Psoas muscle (tissue), 8 donors: ENCODE measurements at regions of chr9 and their contacts with region 1.

Region 1: GRCh38 chr9:133149126-133150107 is 14.3 kb downstream of the GBGT1 start:
- DNase-seq: peak; percentile 93 to 97
- ATAC-seq: peak; percentile 85 to 90 (median 86)
- H3K4me3 ChIP-seq: peak overlapping the region; percentile 84
- H3K27ac ChIP-seq: peak overlapping the region; percentile 77
- H3K4me1 ChIP-seq: peaks cover 26% of the 10 kb centered on the region
- H3K27me3 ChIP-seq: no peaks in the 10 kb centered on the region
- CTCF ChIP-seq: peak; percentile 26

Region 2: DNA sequence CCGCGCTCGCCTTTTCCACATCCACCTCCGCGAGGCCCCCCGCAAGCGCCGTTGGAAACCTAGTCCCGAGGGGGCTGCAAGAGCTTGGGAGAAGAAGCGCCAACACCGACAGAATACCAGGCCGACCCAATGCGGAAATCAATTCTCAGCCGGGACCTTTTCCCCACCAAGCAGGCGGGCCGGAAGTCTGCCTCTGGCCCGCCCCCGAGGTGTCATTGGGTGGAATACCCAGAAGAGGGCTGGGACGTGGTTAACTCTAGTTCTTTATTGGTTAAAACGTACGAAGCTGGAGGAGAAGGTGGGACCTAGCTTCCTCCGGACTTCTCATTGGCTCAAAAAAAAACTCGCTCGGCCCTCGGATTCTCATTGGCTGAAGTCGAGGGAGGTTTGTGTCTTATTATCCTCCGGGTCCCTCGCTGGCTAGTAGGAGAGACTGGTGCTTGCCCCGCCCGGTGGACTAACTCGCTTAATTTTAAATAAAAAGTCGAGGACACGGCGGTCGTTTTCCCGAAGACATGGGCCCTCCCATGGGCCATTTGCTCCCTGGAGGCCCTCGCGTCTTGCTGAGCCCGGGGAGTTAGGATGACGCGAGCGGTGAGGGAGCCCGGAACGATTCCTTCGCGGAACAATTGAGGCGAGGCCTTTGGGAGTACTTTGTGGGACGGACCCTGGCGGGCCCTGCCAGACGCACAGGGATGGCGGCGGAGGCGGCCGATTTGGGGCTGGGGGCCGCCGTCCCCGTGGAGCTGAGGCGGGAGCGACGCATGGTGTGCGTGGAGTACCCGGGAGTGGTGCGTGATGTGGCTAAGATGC is 118.9 kb before region 1 on chr9 and contains the start of gene GTF3C5:
- intact Hi-C with region 1: loop called in 1 of 2 experiments (anchors 2 kb)
- DNase-seq: peak; percentile 92 to 95
- ATAC-seq: peak; percentile 98 to 99 (median 98)
- H3K4me3 ChIP-seq: peak within 1 kb of the TSS; percentile 99
- H3K27ac ChIP-seq: peak within 1 kb of the TSS; percentile 86
- H3K4me1 ChIP-seq: peaks cover 36% of the 10 kb centered on the region
- H3K27me3 ChIP-seq: no peaks in the 10 kb centered on the region
- CTCF ChIP-seq: no peak
- total RNA-seq, gene GTF3C5: 34.6 to 45.8 (median 42.2) TPM

Region 3: DNA sequence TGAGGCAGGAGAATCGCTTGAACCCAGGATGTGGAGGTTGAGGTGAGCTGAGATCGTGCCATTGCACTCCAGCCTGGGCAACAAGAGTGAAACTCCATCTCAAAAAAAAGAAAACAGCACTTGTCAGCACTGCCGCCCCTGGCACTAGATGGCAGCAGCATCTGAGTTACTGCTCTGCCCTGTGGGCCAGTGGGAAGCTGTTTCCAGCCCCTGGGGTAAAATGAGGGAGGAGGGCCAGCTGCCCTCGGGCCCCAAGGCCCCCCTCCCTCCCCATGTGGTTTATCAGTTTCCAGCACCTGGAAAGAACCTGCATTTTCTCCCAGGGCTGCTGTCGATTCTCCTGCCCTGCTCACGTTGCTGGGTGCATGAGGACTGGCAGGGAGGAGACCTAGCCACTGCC is 100.8 kb before region 1 on chr9:
- intact Hi-C with region 1: loop called in 1 of 2 experiments (anchors 2 kb)
- DNase-seq: no peak
- ATAC-seq: peak; percentile 56 to 68 (median 61)
- H3K4me3 ChIP-seq: no peak overlapping the region
- H3K27ac ChIP-seq: no peak overlapping the region
- H3K4me1 ChIP-seq: no peaks in the 10 kb centered on the region
- H3K27me3 ChIP-seq: no peaks in the 10 kb centered on the region
- CTCF ChIP-seq: peak; percentile 31

Region 4: DNA sequence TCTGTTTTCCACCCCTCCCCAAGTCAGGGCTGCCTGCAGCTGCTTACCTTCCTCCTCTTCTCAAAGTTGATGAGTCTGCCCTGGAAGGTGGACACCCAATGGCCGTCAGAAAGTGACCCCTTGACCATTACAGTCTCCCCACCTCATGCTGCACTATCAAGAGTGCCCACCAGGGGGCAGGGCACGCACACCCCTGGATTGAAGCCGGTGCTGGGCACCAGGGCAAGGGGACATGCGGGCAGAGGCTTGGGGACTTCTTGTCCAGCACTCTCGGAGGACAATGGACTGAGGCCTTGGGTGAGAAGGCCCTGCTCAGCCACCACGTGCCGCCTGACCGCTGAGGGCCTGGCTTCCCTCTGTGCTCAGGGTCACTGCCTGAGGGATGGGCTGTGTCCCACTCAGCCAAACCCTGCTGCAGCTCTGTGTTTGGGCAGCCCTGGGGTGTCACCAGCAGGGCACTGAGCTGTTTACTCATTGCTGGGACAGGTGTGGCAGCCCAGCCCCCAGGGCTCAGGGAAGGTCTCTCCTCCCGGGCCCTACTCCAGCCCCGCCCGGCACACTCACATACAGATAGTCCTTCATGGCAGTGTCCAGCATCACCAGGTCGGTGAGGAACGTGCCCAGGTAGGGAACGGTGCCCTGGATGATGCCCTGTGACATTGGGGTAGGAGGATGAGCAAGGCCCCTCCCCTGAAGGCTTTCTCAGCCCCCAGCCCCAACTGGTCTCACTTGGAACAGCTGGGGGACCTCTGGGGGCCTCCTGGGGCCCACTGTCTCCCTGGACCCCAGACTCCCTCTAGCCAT is 46.0 kb before region 1 on chr9:
- intact Hi-C with region 1: loop called (anchors 1 kb)
- DNase-seq: peak; percentile 76 to 88
- ATAC-seq: peak; percentile 79 to 90 (median 83)
- H3K4me3 ChIP-seq: no peak overlapping the region
- H3K27ac ChIP-seq: no peak overlapping the region
- H3K4me1 ChIP-seq: no peaks in the 10 kb centered on the region
- H3K27me3 ChIP-seq: no peaks in the 10 kb centered on the region
- CTCF ChIP-seq: peak; percentile 99

Region 5: GRCh38 chr9:133113949-133114885 is 35.2 kb before region 1 on chr9:
- intact Hi-C with region 1: loop called in 1 of 2 experiments (anchors 2 kb)
- DNase-seq: peak; percentile 67 to 88
- ATAC-seq: peak; percentile 65 to 83 (median 76)
- H3K4me3 ChIP-seq: peak overlapping the region; percentile 37
- H3K27ac ChIP-seq: peak overlapping the region; percentile 90
- H3K4me1 ChIP-seq: peaks cover 75% of the 10 kb centered on the region
- H3K27me3 ChIP-seq: no peaks in the 10 kb centered on the region
- CTCF ChIP-seq: no peak

Region 6: DNA sequence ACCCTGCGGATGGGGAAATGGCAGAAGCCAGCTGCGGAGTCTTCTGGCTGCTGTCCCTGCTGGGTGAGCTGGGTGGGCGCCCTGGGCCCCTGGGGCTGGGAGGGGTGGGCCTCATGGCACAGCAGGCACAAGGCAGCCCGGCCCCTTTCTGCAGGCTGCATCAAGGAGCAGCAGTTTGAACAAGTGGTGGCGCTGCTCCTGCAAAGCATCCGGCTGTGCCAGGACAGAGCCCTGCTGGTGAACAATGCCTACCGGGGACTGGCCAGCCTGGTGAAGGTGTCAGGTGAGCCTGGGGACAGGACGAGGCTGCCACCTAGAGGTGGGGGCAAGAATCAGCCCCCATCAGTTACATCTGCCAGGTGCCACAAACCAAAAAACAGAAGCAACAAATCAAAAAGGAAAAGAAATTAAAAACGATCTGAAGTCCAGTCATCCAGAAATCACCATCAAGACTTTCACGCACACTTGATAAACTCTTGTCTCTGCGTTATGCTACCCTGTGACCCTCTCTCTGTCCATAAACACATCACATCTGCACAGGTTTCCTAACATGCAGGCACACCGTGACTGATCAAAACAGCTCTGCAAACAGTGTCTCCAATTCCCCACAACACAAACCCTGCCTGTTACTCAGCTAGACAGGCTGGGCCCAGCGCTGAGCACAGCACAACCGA is 254.5 kb after region 1 on chr9:
- intact Hi-C with region 1: no loop called
- DNase-seq: peak in 1 of 2 donors; percentile 71
- ATAC-seq: peak; percentile 37 to 49 (median 46)
- H3K4me3 ChIP-seq: no peak overlapping the region
- H3K27ac ChIP-seq: no peak overlapping the region
- H3K4me1 ChIP-seq: peaks cover 18% of the 10 kb centered on the region
- H3K27me3 ChIP-seq: no peaks in the 10 kb centered on the region
- CTCF ChIP-seq: peak; percentile 66